MCF 10A (cell line): ENCODE measurements at regions of chr12 and their contacts with region 1.

Region 1: GRCh38 chr12:4763549-4763948 is 43.3 kb downstream of the GALNT8 start:
- DNase-seq: no peak
- H3K4me3 Mint-ChIP-seq: no peak overlapping the region
- H3K27ac Mint-ChIP-seq: no peak overlapping the region
- H3K4me1 Mint-ChIP-seq: no peaks in the 10 kb centered on the region
- H3K27me3 Mint-ChIP-seq: peaks cover 34% of the 10 kb centered on the region
- CTCF ChIP-seq: no peak

Region 2: DNA sequence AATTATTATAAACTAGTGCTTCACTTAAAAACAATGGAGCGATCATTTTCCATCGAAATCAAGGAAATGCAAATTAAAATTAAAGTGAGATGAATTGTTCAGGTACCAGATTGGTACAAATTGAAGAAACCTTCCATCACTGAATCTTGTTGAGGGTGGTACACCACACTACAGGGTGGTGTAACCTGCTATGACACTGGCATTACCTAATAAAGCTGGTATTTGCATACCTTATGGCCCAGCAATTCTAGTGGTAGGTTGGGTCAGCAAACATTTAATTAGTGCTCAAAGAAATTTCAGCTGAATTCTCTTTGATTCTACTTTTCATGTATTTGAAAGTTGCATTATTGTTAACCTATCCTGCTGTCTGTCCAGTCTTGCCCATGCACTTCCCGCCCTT is 433.3 kb before region 1 on chr12:
- CTCF ChIA-PET with region 1: no interaction called
- POLR2A ChIA-PET with region 1: no interaction called
- intact Hi-C with region 1: no loop called
- DNase-seq: no peak
- H3K4me3 Mint-ChIP-seq: no peak overlapping the region
- H3K27ac Mint-ChIP-seq: no peak overlapping the region
- H3K4me1 Mint-ChIP-seq: peaks cover 5% of the 10 kb centered on the region
- H3K27me3 Mint-ChIP-seq: no peaks in the 10 kb centered on the region
- CTCF ChIP-seq: no peak

Region 3: DNA sequence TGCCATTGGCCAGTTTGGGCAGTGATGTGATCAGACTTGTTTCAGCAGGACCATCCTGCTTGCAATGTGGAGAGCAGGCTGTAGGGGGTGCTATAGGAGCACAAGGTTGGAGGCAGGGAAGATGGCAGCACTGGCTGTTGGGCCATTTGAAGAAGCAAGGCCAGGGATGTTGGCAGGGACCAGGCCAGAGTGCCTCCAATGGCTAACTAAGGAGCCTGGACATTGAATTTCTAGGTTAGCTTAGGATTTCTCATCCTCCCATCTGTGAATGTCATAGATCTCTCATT is 407.6 kb before region 1 on chr12:
- CTCF ChIA-PET with region 1: no interaction called
- POLR2A ChIA-PET with region 1: no interaction called
- intact Hi-C with region 1: loop called (anchors 10 kb)
- DNase-seq: peak; percentile 32
- H3K4me3 Mint-ChIP-seq: no peak overlapping the region
- H3K27ac Mint-ChIP-seq: no peak overlapping the region
- H3K4me1 Mint-ChIP-seq: no peaks in the 10 kb centered on the region
- H3K27me3 Mint-ChIP-seq: no peaks in the 10 kb centered on the region
- CTCF ChIP-seq: peak; percentile 37

Region 4: DNA sequence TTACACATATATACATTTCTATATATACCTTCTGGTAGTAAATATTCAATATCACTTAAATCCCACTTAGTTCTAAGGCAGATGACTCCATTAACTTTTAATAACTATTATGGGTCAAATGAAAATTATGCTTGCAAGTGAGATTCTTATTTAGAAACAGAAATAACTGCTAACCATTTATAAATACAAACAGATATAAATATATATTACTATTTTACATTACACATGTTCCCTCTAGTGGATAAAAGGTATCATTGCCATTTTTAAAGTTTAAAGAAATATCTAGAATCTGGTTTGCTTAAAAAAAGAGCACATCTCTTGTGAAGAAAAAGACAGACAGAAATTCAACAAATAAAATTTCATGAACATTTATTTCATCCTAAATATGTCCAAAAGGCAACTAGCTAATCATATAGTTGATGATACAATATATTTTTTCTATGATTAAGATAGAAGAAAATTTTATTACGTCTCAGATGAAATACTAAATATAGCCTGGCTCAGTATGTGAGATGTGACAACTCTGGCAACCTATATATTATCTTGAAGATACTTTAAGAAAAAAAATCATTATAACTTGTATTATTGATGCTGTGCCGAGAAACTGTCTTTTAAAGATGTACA is 236.5 kb before region 1 on chr12:
- CTCF ChIA-PET with region 1: no interaction called
- POLR2A ChIA-PET with region 1: no interaction called
- intact Hi-C with region 1: loop called (anchors 2 kb)
- DNase-seq: peak; percentile 16
- H3K4me3 Mint-ChIP-seq: no peak overlapping the region
- H3K27ac Mint-ChIP-seq: no peak overlapping the region
- H3K4me1 Mint-ChIP-seq: no peaks in the 10 kb centered on the region
- H3K27me3 Mint-ChIP-seq: no peaks in the 10 kb centered on the region
- CTCF ChIP-seq: peak; percentile 31

Region 5: DNA sequence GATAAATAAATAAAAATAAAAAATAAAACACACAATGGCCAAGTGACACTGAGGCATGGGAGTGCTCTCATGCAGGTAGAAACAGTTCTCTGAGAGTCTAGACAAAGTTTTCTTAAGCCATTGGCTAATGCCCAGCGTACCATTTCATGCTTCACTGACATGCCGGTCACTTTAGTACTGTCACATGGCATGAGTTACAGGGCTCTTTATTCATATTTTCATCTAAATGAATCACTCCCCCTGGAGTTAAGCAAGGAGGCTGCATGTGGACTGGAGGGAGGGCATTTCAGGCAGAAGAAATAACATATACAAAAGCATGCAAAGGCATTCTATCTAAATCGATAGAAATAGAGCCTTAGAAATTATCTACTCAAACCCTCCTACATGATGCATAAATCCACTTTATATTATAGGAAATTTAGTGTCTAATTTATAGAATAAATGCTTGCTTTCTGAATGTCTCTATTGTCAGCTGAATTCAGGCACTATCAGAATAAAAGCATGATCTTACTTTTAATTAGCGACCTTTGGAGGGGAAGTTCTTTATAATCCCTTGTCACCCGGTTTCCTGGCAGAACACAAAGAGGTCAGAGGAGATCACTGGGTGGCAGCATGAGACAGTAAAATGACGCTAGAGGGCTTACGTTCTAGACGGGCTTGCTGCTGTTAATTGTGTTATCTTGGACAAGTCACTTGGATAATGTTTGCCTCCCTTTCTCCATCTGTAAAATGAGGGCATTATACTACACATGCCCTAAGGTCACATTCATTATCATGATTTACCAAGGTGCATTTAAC is 184.0 kb before region 1 on chr12:
- CTCF ChIA-PET with region 1: interaction called, 4 read pairs
- POLR2A ChIA-PET with region 1: no interaction called
- intact Hi-C with region 1: loop called (anchors 10 kb)
- DNase-seq: no peak
- H3K4me3 Mint-ChIP-seq: no peak overlapping the region
- H3K27ac Mint-ChIP-seq: no peak overlapping the region
- H3K4me1 Mint-ChIP-seq: no peaks in the 10 kb centered on the region
- H3K27me3 Mint-ChIP-seq: no peaks in the 10 kb centered on the region
- CTCF ChIP-seq: no peak

Region 6: DNA sequence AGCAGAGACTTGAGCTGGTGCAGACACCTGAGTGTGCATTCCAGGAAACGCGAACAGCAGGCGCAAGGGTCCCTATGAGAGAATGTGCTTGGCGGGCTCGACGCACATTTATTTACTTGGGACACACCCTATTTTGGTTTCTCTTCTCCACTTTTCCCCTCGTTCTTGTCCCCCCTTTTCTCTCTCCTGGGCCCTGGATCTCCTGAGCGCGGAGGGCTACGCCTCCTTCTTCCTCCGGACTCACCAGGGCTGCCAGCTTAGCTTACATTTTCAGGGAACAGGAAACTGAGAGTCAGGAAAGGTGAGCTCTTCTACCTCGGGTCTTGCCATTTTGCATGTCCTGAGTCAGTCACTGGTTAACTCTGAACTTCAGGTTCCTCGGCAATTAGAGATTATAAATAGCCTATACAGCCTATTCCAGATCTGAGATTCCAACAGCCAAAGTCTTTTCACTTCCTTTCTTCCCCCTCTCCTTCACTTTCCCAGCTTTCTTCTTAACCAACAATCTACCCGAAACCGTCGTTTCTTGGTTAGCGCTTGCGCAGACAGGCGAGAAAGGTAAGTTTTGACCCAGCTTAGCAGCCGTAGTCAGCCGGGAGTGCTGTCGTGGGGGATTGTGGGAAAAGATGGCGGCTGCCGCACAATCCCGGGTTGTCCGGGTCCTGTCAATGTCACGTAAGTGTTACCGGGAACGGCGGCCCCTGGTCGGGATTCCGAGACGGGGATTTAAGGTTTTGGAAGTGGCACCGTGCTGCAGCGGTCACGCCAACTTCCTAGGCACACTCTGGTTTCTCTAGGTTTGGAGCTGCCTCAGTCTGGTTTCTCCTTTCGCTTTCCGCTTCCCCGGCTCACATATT is 114.8 kb before region 1 on chr12 and contains the starts of genes AKAP3 and NDUFA9:
- CTCF ChIA-PET with region 1: interaction called, 7 read pairs
- POLR2A ChIA-PET with region 1: no interaction called
- intact Hi-C with region 1: loop called (anchors 5 kb)
- DNase-seq: peak; percentile 84
- H3K4me3 Mint-ChIP-seq: peak within 1 kb of the TSS; percentile 97
- H3K27ac Mint-ChIP-seq: peak within 1 kb of the TSS; percentile 99
- H3K4me1 Mint-ChIP-seq: peaks cover 29% of the 10 kb centered on the region
- H3K27me3 Mint-ChIP-seq: no peaks in the 10 kb centered on the region
- CTCF ChIP-seq: no peak
- total RNA-seq, gene AKAP3: 0.54 and 1.1 TPM in 2 replicates
- total RNA-seq, gene NDUFA9: 90.1 and 110 TPM in 2 replicates

Region 7: DNA sequence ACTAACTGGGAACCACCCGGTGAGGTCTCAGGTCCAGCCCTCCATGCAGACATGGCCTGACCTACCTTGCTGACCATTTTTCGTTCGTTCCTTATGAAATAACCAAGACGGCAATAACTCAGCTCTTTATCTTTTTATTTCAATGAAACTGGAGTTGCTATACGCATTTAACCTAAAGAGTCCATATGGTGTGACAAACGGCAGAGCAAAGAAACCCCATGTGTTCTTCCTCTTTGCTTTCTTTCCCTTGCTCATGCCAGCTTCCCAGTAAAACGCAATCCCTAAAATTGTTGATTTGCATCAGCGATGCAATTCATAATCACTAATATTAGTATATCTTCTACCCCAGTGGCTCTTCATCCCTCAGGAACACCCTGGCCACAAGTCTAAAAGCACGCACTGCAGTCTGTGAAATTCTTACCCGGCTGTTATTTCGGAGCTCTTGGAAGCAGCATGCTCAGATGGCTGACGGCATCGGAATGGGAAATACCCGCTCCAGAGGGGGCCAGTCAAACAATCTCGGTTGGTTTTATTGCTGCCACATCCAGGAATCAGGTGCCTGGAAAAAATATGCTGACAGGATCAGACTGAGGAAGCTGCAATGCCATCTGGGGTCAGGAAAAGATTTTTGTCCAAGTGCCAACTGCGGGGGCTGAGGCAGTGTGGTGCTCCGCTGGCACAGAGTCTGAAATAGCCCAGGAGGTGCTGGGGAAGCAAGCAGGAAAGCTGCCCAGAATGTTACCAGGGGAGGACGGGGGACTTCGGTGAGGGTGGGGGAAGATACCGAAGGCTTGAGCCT is 117.9 kb after region 1 on chr12:
- CTCF ChIA-PET with region 1: no interaction called
- POLR2A ChIA-PET with region 1: no interaction called
- intact Hi-C with region 1: no loop called
- DNase-seq: no peak
- H3K4me3 Mint-ChIP-seq: no peak overlapping the region
- H3K27ac Mint-ChIP-seq: no peak overlapping the region
- H3K4me1 Mint-ChIP-seq: no peaks in the 10 kb centered on the region
- H3K27me3 Mint-ChIP-seq: no peaks in the 10 kb centered on the region
- CTCF ChIP-seq: no peak